Esophagus muscularis mucosa (tissue), 4 donors: ENCODE measurements at regions of chr2 and their contacts with region 1.

Region 1: DNA sequence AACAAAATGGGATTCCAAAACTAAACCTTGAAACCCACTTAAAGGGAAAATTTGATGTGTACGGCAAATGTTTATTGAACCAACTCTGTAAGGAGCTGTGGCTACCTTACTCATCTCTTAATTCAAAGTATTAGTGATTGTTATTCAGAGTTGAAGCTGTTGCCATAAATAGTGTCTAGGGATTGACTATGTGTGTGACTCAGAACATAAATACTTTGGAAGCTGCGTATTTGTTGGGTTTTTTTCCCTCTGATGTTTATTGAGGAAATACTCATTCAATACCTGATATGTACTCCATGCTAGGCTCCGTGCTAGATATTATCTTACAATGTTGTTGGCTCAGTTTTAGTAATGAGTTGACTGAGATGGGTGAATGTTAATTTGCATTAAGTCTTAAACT is 90.4 kb downstream of the PTRHD1 start:
- DNase-seq: no peak
- H3K4me3 ChIP-seq: no peak overlapping the region
- H3K27ac ChIP-seq: no peak overlapping the region
- H3K4me1 ChIP-seq: peaks cover 7 to 17% (median 11%) of the 10 kb centered on the region in 4 donors
- H3K27me3 ChIP-seq: no peaks in the 10 kb centered on the region
- CTCF ChIP-seq: no peak
- EP300 ChIP-seq: no peak
- POLR2A ChIP-seq: no peak

Region 2: DNA sequence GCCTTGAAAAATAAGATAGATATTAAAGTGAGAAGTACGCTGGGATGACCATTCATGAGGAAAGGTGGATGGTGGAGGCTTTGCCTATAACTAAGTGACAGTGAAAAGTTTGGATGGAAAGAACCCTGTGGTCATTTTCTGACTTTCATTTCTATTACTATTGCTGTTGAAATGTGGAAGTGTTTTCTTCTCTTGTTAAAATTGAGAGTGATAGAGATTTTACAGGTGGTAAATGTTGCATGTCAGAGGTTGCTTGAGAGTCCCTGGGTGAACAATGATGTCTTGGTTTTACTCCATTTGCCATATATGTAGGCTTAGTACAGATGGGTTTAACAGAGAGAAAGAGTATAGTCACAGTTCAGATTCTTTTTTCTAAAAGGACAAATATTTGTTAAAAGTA is 193.4 kb before region 1 on chr2:
- intact Hi-C with region 1: loop called (anchors 10 kb)
- DNase-seq: no peak
- H3K4me3 ChIP-seq: no peak overlapping the region
- H3K27ac ChIP-seq: no peak overlapping the region
- H3K4me1 ChIP-seq: peaks cover 55 to 83% (median 80%) of the 10 kb centered on the region in 4 donors
- H3K27me3 ChIP-seq: no peaks in the 10 kb centered on the region
- CTCF ChIP-seq: no peak
- EP300 ChIP-seq: no peak
- POLR2A ChIP-seq: no peak